Motor neuron (in vitro differentiated cells): ENCODE measurements at regions of chr3 and their contacts with region 1.

Region 1: DNA sequence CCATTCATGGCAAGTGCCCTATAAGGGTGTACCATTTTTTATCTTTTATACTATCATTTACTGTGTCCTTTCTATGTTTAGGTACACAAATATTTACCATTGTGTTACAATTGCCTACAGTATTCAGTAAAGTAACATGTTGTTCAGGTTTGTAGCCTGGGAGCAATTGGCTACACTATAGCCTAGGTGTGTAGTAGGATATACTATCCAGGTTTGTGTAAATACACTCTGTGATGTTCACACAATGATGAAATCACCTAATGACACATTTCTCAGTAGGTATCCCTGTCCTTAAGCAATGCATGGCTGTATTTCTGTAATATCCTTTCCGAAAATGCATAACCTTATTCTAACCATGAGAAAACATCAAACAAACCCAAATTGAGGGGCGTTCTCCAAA is 17.9 kb upstream of the CNOT10 start:
- ATAC-seq: no peak
- H3K4me3 ChIP-seq: no peak overlapping the region
- H3K27ac ChIP-seq: no peak overlapping the region
- H3K4me1 ChIP-seq: no peaks in the 10 kb centered on the region

Region 2: GRCh38 chr3:32374788-32375595 is 292.1 kb before region 1 on chr3:
- in situ Hi-C with region 1: loop called in 1 of 9 experiments (anchors 25 kb)
- ATAC-seq: peak in 4 of 8 experiments; percentile 52 to 90 (median 82)
- H3K4me3 ChIP-seq: no peak overlapping the region
- H3K27ac ChIP-seq: no peak overlapping the region
- H3K4me1 ChIP-seq: peaks cover 4% of the 10 kb centered on the region in 2 donors

Region 3: GRCh38 chr3:32502118-32502945 is 164.8 kb before region 1 on chr3 and contains the start of gene CMTM6:
- in situ Hi-C with region 1: loop called in 4 of 9 experiments (anchors 10 to 25 kb)
- ATAC-seq: peak; percentile 81 to 93 (median 90)
- H3K4me3 ChIP-seq: peak within 1 kb of the TSS; percentile 82 to 97 (median 90)
- H3K27ac ChIP-seq: peak within 1 kb of the TSS; percentile 37 to 78
- H3K4me1 ChIP-seq: peaks cover 0 to 8% of the 10 kb centered on the region in 2 donors
- total RNA-seq, gene CMTM6: 11.4 to 275 (median 28.6) TPM

Region 4: GRCh38 chr3:32510075-32510724 is 156.9 kb before region 1 on chr3:
- in situ Hi-C with region 1: loop called in 5 of 9 experiments (anchors 10 to 25 kb)
- ATAC-seq: peak; percentile 53 to 93 (median 84)
- H3K4me3 ChIP-seq: no peak overlapping the region
- H3K27ac ChIP-seq: no peak overlapping the region
- H3K4me1 ChIP-seq: peaks cover 0 to 2% of the 10 kb centered on the region in 2 donors